Natural killer cell (primary cell): ENCODE measurements at regions of chr5 and their contacts with region 1.

Region 1: GRCh38 chr5:135376961-135377624 is 21.9 kb downstream of the MACROH2A1 start:
- DNase-seq: no peak
- ATAC-seq: no peak
- H3K4me3 ChIP-seq: no peak overlapping the region
- H3K4me3 Mint-ChIP-seq: no peak overlapping the region
- H3K27ac ChIP-seq: no peak overlapping the region
- H3K27ac Mint-ChIP-seq: peak overlapping the region in 1 of 2 donors; percentile 59
- H3K4me1 ChIP-seq: peaks cover 21% of the 10 kb centered on the region
- H3K4me1 Mint-ChIP-seq: peaks cover 51 to 81% of the 10 kb centered on the region in 2 donors
- H3K27me3 ChIP-seq: no peaks in the 10 kb centered on the region
- H3K27me3 Mint-ChIP-seq: no peaks in the 10 kb centered on the region
- CTCF ChIP-seq: no peak

Region 2: DNA sequence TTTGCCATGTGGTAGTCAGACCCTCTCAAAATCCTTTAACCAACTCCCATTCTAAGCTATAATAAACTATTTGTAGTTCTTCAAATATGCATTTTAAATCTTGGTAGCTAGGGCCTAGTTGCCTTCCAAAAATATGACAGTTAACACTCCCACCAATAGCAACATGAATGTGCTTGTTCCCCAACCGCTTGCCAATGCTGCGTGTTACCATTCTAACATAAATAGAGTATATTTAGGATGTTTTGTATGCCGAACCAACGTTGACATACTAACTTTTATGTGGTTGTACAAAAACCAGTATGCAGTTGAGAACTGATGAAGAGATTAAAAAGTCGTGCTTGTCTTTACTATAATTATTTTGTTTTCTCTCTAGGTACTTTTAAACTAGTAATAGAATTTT is 996.7 kb before region 1 on chr5:
- intact Hi-C with region 1: no loop called
- DNase-seq: peak in 1 of 2 donors; percentile 40
- ATAC-seq: no peak
- H3K4me3 ChIP-seq: no peak overlapping the region
- H3K4me3 Mint-ChIP-seq: no peak overlapping the region
- H3K27ac ChIP-seq: no peak overlapping the region
- H3K27ac Mint-ChIP-seq: peak overlapping the region; percentile 34 to 57
- H3K4me1 ChIP-seq: peaks cover 3% of the 10 kb centered on the region
- H3K4me1 Mint-ChIP-seq: peaks cover 27 to 31% of the 10 kb centered on the region in 2 donors
- H3K27me3 ChIP-seq: no peaks in the 10 kb centered on the region
- H3K27me3 Mint-ChIP-seq: no peaks in the 10 kb centered on the region
- CTCF ChIP-seq: no peak

Region 3: GRCh38 chr5:135426102-135427082 is 49.3 kb after region 1 on chr5:
- intact Hi-C with region 1: loop called (anchors 5 kb)
- DNase-seq: peak in 1 of 2 donors; percentile 66
- ATAC-seq: peak; percentile 86 to 95 (median 93)
- H3K4me3 ChIP-seq: no peak overlapping the region
- H3K4me3 Mint-ChIP-seq: no peak overlapping the region
- H3K27ac ChIP-seq: no peak overlapping the region
- H3K27ac Mint-ChIP-seq: no peak overlapping the region
- H3K4me1 ChIP-seq: peaks cover 5% of the 10 kb centered on the region
- H3K4me1 Mint-ChIP-seq: no peaks in the 10 kb centered on the region
- H3K27me3 ChIP-seq: peaks cover 2% of the 10 kb centered on the region
- H3K27me3 Mint-ChIP-seq: peaks cover 2 to 6% of the 10 kb centered on the region in 2 donors
- CTCF ChIP-seq: peak; percentile 72

Region 4: GRCh38 chr5:135457424-135458071 is 80.5 kb after region 1 on chr5:
- intact Hi-C with region 1: no loop called
- DNase-seq: peak; percentile 42 to 66
- ATAC-seq: peak; percentile 62 to 78 (median 70)
- H3K4me3 ChIP-seq: no peak overlapping the region
- H3K4me3 Mint-ChIP-seq: no peak overlapping the region
- H3K27ac ChIP-seq: no peak overlapping the region
- H3K27ac Mint-ChIP-seq: no peak overlapping the region
- H3K4me1 ChIP-seq: peaks cover 5% of the 10 kb centered on the region
- H3K4me1 Mint-ChIP-seq: no peaks in the 10 kb centered on the region
- H3K27me3 ChIP-seq: no peaks in the 10 kb centered on the region
- H3K27me3 Mint-ChIP-seq: peaks cover 6% of the 10 kb centered on the region in 2 donors
- CTCF ChIP-seq: peak; percentile 82